Gastrocnemius medialis (tissue), 4 donors: ENCODE measurements at regions of chr3 and their contacts with region 1.

Region 1: GRCh38 chr3:169637729-169638128 is 25.8 kb downstream of the MECOM start:
- DNase-seq: no peak
- ATAC-seq: no peak
- H3K4me3 ChIP-seq: no peak overlapping the region
- H3K27ac ChIP-seq: no peak overlapping the region
- H3K4me1 ChIP-seq: no peaks in the 10 kb centered on the region
- H3K27me3 ChIP-seq: no peaks in the 10 kb centered on the region
- CTCF ChIP-seq: no peak
- POLR2A ChIP-seq: no peak

Region 2: DNA sequence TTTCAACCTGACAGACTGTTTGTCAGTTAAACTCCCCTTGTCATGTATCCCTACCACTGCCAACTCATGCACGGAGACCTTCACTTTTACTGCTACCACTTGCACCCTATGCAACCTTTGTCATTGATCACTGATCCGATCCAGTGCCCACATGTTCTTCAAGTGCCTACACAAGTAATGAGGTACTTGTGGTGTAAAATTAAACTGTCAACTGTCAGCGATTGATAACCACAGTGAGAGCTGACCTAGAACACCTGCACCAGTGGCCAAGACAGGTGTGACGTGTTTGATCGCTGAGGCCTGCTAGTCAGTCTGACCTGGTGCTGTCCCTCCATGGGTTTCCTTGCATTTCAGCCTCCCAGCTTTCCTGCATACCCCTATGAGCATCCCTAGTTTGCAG is 29.8 kb before region 1 on chr3:
- in situ Hi-C with region 1: no loop called
- intact Hi-C with region 1: loop called (anchors 1 kb)
- DNase-seq: no peak
- ATAC-seq: no peak
- H3K4me3 ChIP-seq: no peak overlapping the region
- H3K27ac ChIP-seq: no peak overlapping the region
- H3K4me1 ChIP-seq: no peaks in the 10 kb centered on the region
- H3K27me3 ChIP-seq: no peaks in the 10 kb centered on the region
- CTCF ChIP-seq: no peak
- POLR2A ChIP-seq: no peak